Gastrocnemius medialis (tissue), 4 donors: ENCODE measurements at regions of chr3 and their contacts with region 1.

Region 1: DNA sequence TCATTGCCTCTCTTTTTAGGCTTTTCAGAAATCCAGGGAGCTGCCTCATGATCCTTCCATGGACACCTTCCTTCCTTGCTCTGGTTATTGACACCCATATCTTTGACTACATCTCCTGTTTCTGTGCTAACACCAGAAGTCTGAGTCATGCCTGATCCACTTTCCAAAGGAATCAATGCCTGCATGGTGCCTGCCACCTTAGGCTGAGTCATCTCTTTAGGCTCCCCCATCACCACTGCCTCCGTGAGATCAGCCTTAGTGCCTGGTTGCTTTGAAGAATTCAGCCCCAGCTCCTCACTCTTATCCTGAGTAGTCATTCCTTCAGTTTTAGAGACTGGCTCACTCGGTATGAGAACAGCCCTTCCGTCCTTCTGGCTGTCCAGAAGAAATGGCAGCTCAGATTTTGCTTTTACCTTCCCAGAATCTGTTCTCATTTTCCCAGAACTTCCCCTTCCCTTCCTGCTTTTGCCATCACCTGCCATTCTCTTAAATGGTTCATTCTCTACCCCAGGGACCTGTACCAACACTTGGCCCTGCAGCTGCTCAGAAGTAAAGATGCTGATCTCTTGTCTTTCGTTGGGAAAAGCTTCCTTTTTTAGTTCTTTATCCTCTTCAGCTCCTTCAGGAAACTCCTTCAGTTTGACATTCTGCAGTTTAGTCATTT is 105.3 kb downstream of the MAP4 start:
- DNase-seq: peak; percentile 19 to 46
- ATAC-seq: peak; percentile 83 to 90
- H3K4me3 ChIP-seq: no peak overlapping the region
- H3K27ac ChIP-seq: peak overlapping the region; percentile 58 to 80 (median 74)
- H3K4me1 ChIP-seq: peaks cover 14 to 31% of the 10 kb centered on the region in 2 donors
- H3K27me3 ChIP-seq: no peaks in the 10 kb centered on the region
- CTCF ChIP-seq: no peak
- POLR2A ChIP-seq: no peak

Region 2: DNA sequence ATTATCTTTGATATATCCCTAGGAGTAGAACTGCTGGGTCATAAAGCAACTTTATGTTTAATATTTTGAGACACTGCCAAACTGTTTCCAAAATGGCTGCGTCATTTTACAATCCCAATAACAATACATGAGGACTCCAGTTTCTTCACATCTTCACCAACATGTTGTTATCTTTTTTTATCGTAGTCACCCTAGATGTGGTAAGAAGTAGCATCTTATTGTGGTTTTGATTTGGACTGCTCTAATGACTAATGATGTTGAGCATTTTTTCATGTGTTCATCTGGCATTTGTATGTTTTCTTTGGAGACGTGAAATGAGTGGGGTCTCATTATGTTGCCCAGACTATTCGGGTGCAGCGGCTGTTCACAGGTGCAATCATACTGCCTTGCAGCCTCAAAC is 21.5 kb after region 1 on chr3:
- in situ Hi-C with region 1: no loop called
- intact Hi-C with region 1: loop called (anchors 2 kb)
- DNase-seq: no peak
- ATAC-seq: no peak
- H3K4me3 ChIP-seq: no peak overlapping the region
- H3K27ac ChIP-seq: peak overlapping the region in 2 of 4 donors; percentile 17 to 45
- H3K4me1 ChIP-seq: peaks cover 0 to 11% of the 10 kb centered on the region in 2 donors
- H3K27me3 ChIP-seq: no peaks in the 10 kb centered on the region
- CTCF ChIP-seq: no peak
- POLR2A ChIP-seq: no peak